Thyroid gland (tissue), 4 donors: ENCODE measurements at regions of chr12 and their contacts with region 1.

Region 1: DNA sequence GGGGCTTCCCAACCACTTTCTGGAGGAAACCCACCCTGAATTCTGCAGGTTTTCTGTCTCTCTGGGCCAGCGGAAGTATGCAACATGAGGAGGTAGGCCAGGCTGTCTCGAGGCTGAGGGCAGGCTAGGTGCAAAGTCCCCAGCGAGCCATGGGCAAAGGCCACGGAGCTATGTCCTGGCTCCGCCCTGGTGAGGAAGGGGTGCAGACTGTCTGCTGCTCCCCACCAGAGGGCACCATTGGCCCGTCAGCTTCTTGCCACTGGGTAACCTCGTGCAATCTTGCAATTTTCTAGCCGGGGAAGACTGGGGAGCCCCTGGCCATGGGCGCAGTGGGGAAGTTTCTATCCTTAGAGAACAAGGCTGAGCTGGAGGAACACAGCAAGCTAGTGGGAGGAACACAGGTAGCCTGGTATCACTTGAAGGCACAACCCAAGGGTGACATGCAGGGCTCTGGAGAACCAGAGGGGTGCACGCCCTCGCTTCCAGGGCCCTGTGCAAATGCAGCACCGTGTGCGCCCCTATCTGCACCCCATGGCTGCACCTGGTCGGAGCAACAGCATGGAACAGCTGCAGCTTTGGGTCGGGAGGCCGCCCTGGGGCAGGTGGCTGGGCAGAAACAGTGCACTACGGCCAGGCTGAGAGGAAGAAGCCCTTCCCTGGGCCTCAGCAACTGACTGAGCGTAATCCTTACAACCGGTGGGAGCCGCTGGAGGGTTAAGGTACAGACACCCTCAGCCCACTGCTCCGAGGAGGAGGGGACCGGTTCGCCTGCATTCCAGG is 27.6 kb upstream of the RPLP0 start:
- DNase-seq: peak; percentile 93 to 95
- H3K4me3 ChIP-seq: no peak overlapping the region
- H3K27ac ChIP-seq: peak overlapping the region; percentile 77 to 96 (median 96)
- H3K4me1 ChIP-seq: peaks cover 76 to 89% of the 10 kb centered on the region in 2 donors
- H3K27me3 ChIP-seq: no peaks in the 10 kb centered on the region
- CTCF ChIP-seq: peak; percentile 61 to 97 (median 96)
- POLR2A ChIP-seq: peak in 1 of 2 donors; percentile 27

Region 2: GRCh38 chr12:120265473-120266179 is 37.1 kb after region 1 on chr12 and contains the start of gene PXN:
- intact Hi-C with region 1: loop called (anchors 2 kb)
- DNase-seq: peak; percentile 83 to 88
- H3K4me3 ChIP-seq: peak within 1 kb of the TSS; percentile 40 to 99 (median 92)
- H3K27ac ChIP-seq: peak within 1 kb of the TSS; percentile 85 to 97 (median 96)
- H3K4me1 ChIP-seq: peaks cover 40 to 48% of the 10 kb centered on the region in 2 donors
- H3K27me3 ChIP-seq: no peaks in the 10 kb centered on the region
- CTCF ChIP-seq: peak; percentile 53 to 91 (median 70)
- POLR2A ChIP-seq: peak in 1 of 2 donors; percentile 81
- total RNA-seq, gene PXN: 61.7 to 95.5 (median 82.7) TPM